Colonic mucosa (tissue), 4 donors: ENCODE measurements at regions of chr12 and their contacts with region 1.

Region 1: GRCh38 chr12:57008178-57008577 is 1.8 kb upstream of the ZBTB39 start:
- DNase-seq: no peak
- H3K4me3 ChIP-seq: no peak overlapping the region
- H3K27ac ChIP-seq: no peak overlapping the region
- H3K4me1 ChIP-seq: peaks cover 7% of the 10 kb centered on the region
- H3K27me3 ChIP-seq: no peaks in the 10 kb centered on the region
- CTCF ChIP-seq: peak; percentile 49

Region 2: DNA sequence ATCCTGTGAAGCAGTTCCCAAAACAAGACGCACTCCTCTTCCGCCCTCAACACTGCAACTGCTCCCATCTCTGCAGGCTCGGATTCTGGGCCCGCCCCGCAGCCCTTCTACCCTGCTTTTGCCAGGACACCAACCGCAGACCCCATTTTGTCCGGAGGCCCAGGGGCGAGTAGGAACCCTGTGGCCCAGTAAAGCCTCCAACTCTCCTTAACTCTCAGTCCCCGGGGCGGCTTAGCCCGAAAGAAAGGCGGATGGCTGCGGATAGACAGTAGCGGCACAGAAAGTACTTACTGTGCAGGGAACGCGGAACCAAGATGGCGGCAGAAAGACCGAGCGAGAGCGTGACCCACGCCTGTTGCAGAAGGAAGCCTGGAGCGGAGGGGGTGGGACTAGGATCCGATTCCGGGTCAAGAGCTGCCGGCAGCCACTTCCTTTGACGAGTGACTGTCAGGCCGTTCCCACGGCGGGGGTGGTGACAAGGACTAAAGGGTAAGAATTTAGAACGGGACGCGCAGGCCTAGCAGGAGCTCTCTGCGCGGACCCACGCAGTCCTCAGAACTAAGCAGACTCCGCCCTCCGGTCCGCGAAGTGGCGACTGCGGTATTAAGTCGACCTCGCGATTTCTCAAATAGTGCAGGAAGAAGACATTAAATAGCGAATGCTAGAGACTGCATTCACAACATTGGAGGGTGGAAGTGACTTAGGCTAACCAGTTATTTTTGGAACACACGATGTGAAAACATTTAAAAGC is 283.0 kb before region 1 on chr12 and contains the start of gene NACA:
- intact Hi-C with region 1: no loop called
- DNase-seq: peak; percentile 99
- H3K4me3 ChIP-seq: peak within 1 kb of the TSS; percentile 86
- H3K27ac ChIP-seq: peak within 1 kb of the TSS; percentile 90
- H3K4me1 ChIP-seq: peaks cover 13% of the 10 kb centered on the region
- H3K27me3 ChIP-seq: no peaks in the 10 kb centered on the region
- CTCF ChIP-seq: no peak
- total RNA-seq, gene NACA: 622 to 763 TPM

Region 3: DNA sequence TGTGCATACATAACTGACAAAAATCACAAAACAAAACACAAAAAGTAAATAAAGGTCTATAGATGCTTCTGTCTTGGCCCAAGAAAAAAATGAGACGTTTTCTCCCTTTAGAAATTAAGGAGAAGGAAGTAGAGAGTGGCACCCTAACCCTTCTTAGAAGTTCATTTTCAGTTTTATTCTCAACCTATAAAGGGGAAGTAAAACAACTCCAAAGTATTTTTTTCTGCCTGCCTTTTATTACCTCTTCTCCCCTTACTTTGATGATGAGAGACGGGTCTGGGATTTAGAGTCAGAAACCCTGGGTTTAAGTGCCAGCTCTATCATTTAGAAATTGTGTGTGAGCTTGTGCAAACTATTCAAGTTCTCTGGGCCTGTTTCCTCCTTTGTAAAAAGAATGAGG is 258.8 kb before region 1 on chr12:
- intact Hi-C with region 1: no loop called
- DNase-seq: no peak
- H3K4me3 ChIP-seq: no peak overlapping the region
- H3K27ac ChIP-seq: no peak overlapping the region
- H3K4me1 ChIP-seq: no peaks in the 10 kb centered on the region
- H3K27me3 ChIP-seq: no peaks in the 10 kb centered on the region
- CTCF ChIP-seq: no peak

Region 4: GRCh38 chr12:57058454-57058853 is 50.3 kb after region 1 on chr12:
- intact Hi-C with region 1: loop called (anchors 2 kb)
- DNase-seq: no peak
- H3K4me3 ChIP-seq: no peak overlapping the region
- H3K27ac ChIP-seq: no peak overlapping the region
- H3K4me1 ChIP-seq: no peaks in the 10 kb centered on the region
- H3K27me3 ChIP-seq: no peaks in the 10 kb centered on the region
- CTCF ChIP-seq: no peak

Region 5: GRCh38 chr12:57182921-57183790 is 175.0 kb after region 1 on chr12:
- intact Hi-C with region 1: loop called (anchors 10 kb)
- DNase-seq: peak; percentile 84
- H3K4me3 ChIP-seq: no peak overlapping the region
- H3K27ac ChIP-seq: no peak overlapping the region
- H3K4me1 ChIP-seq: no peaks in the 10 kb centered on the region
- H3K27me3 ChIP-seq: no peaks in the 10 kb centered on the region
- CTCF ChIP-seq: peak; percentile 76